CD8-positive, alpha-beta memory T cell (primary cell): ENCODE measurements at regions of chr20 and their contacts with region 1.

Region 1: DNA sequence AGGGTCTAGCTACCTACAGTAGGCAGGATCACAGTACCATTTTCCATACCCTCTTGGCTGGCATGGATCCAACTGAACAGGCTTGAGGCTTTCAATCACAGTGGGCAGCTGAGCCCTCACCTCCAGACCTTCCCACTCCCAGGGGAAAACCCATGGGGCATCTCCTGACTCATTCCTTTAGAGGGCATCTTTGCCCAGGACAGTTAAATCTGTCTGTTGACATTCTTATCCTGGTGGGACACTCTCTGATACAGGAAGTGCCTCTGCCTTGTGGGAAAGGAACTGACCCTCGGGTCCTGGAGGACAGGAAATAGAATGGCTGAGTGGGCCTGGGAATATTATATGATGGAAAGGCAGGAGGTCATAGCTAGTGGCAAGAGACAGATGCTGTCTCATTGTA is 10.2 kb upstream of the EPB41L1 start:
- DNase-seq: no peak
- H3K4me3 ChIP-seq: no peak overlapping the region
- H3K4me3 Mint-ChIP-seq: no peak overlapping the region
- H3K27ac ChIP-seq: no peak overlapping the region
- H3K27ac Mint-ChIP-seq: no peak overlapping the region
- H3K4me1 ChIP-seq: no peaks in the 10 kb centered on the region
- H3K4me1 Mint-ChIP-seq: peaks cover 0 to 4% (median 2%) of the 10 kb centered on the region in 3 donors
- H3K27me3 ChIP-seq: no peaks in the 10 kb centered on the region
- H3K27me3 Mint-ChIP-seq: peaks cover 24 to 63% of the 10 kb centered on the region in 2 donors

Region 2: DNA sequence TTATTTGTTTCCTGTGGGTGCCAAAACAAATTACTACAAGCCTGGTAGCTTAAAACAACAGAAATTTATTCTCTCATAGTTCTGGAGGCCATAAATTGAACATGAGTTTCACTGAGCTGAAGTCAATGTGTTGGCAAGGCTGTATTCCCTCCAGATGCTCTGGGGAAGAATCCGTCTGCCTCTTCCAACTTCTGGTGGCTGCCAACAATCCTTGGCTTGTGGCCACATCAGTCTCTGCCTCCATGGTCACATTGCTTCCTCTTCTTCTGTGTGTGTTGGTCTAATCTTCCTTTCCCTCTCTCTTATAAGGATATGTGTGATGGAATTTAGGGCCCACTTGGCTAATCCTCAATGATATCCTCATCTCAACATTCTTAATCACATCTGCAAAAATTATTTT is 82.6 kb before region 1 on chr20:
- CTCF ChIA-PET with region 1: no interaction called
- POLR2A ChIA-PET with region 1: no interaction called
- DNase-seq: no peak
- H3K4me3 ChIP-seq: no peak overlapping the region
- H3K4me3 Mint-ChIP-seq: no peak overlapping the region
- H3K27ac ChIP-seq: no peak overlapping the region
- H3K27ac Mint-ChIP-seq: no peak overlapping the region
- H3K4me1 ChIP-seq: peaks cover 4% of the 10 kb centered on the region
- H3K4me1 Mint-ChIP-seq: peaks cover 0 to 4% (median 0%) of the 10 kb centered on the region in 3 donors
- H3K27me3 ChIP-seq: no peaks in the 10 kb centered on the region
- H3K27me3 Mint-ChIP-seq: peaks cover 3 to 7% of the 10 kb centered on the region in 2 donors

Region 3: DNA sequence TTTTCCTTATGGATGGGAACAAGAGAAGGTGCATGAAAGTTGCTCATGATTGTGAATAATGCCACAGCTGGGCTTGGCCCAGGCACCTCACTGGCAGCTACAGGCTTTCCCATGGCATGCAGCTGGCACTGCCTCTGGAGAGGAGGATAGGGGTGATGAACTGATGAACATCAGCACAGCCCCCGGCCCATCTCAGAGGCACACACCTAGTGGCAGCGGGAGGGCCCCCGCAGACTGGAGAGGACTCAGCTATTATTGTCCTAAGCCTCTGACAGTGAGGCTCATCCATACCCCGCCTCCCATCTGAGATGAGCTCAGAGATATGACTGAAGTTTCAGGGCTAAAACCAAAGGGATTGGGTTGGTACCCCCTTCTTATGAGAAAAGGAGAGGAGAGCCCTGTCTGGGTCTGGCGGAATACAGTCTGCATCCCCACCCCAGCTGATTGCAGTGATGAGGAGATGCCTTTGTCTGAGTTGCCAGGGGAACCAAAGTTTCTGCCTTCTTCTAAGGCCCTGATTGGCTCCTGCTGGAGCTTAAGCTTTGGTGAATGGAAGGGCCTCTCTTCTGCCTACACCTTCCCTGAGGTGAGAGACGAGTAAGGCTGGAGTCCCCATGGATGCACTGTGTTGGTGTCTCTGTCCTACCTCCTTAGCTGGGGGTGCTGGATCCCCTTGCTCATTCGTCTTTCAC is 17.4 kb before region 1 on chr20:
- CTCF ChIA-PET with region 1: interaction called, 17 read pairs
- POLR2A ChIA-PET with region 1: no interaction called
- DNase-seq: no peak
- H3K4me3 ChIP-seq: no peak overlapping the region
- H3K4me3 Mint-ChIP-seq: no peak overlapping the region
- H3K27ac ChIP-seq: no peak overlapping the region
- H3K27ac Mint-ChIP-seq: no peak overlapping the region
- H3K4me1 ChIP-seq: no peaks in the 10 kb centered on the region
- H3K4me1 Mint-ChIP-seq: peaks cover 0 to 3% (median 0%) of the 10 kb centered on the region in 3 donors
- H3K27me3 ChIP-seq: no peaks in the 10 kb centered on the region
- H3K27me3 Mint-ChIP-seq: peaks cover 1 to 7% of the 10 kb centered on the region in 2 donors

Region 4: DNA sequence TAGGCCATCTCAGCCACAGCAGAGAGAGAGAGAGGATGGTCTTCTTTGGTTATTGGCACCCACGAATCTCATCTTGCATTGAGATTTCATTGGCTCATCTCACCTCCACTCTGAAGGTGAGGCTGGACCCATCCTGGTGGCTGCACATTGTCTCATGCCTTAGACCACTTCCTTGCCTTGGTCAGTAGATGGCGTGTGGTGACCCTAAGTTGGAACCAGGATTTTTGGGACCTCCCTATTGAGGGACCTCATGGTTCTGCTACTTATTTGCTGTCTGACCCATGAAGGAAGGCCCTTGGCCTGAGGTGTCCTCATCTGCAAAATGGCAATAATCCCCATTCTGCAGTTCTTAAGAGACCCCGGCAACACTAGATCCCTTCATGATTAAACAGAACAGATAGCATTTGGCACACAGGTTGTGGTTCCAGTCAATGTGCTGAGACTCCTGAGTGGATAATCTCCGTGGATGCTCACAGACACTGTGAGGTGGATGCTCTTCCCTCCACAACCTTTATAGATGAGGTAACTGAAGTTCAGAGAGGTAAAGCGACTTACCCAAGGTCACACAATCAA is 70.4 kb after region 1 on chr20:
- CTCF ChIA-PET with region 1: no interaction called
- POLR2A ChIA-PET with region 1: no interaction called
- DNase-seq: no peak
- H3K4me3 ChIP-seq: no peak overlapping the region
- H3K4me3 Mint-ChIP-seq: no peak overlapping the region
- H3K27ac ChIP-seq: no peak overlapping the region
- H3K27ac Mint-ChIP-seq: peak overlapping the region in 1 of 8 donors; percentile 71
- H3K4me1 ChIP-seq: no peaks in the 10 kb centered on the region
- H3K4me1 Mint-ChIP-seq: no peaks in the 10 kb centered on the region
- H3K27me3 ChIP-seq: no peaks in the 10 kb centered on the region
- H3K27me3 Mint-ChIP-seq: peaks cover 5 to 19% of the 10 kb centered on the region in 2 donors